Mammary epithelial cell (primary cell): ENCODE measurements at regions of chr4 and their contacts with region 1.

Region 1: DNA sequence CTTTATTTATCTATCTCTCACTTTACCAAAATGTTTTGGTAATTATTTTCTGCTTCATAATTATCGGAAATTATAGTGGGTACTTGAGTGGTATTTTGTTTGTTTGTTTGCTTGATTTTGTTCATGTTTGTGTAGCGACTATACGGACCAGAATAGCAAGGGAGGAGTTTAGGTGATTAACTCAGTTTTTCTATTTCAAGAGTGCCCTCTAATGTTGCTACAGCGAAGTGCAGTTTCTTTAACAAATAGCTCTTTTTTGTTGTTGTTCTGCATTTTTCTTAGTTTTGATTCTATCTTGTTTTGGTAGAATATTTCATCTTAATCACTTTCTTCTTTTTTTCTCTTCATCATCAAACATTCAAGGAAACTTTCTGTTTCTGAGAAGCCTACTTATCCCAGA is 40.8 kb upstream of the QRFPR start:
- DNase-seq: no peak
- H3K4me3 ChIP-seq: no peak overlapping the region
- H3K27ac ChIP-seq: no peak overlapping the region
- H3K4me1 ChIP-seq: no peaks in the 10 kb centered on the region
- H3K27me3 ChIP-seq: peaks cover 4% of the 10 kb centered on the region
- CTCF ChIP-seq: peak; percentile 58 to 59

Region 2: GRCh38 chr4:121252224-121252806 is 169.3 kb before region 1 on chr4:
- CTCF ChIA-PET with region 1: no interaction called
- dilution Hi-C with region 1: no loop called
- in situ Hi-C with region 1: no loop called
- intact Hi-C with region 1: loop called (anchors 5 kb)
- DNase-seq: peak; percentile 55
- H3K4me3 ChIP-seq: no peak overlapping the region
- H3K27ac ChIP-seq: no peak overlapping the region
- H3K4me1 ChIP-seq: peaks cover 15% of the 10 kb centered on the region
- H3K27me3 ChIP-seq: no peaks in the 10 kb centered on the region
- CTCF ChIP-seq: peak; percentile 90

Region 3: DNA sequence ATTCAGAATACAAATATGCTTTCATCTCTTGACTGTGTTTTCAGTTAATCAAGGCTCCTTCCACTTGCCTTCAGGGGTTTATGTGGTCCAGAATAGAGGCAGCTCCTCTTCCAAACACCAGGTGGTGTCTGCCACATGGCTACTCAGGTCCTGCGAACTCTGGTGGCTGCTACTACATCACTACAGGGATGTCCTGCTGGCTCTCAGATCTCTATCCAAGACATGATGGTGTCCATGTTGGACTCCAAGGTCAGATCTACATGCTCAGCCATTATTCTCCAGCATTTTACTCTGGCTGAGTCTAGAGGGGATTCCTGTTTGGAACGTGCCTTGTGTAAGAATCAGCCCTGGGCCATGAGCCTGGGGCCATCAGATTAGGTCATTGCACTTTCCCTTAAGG is 144.0 kb before region 1 on chr4:
- CTCF ChIA-PET with region 1: interaction called, 5 read pairs
- dilution Hi-C with region 1: no loop called
- in situ Hi-C with region 1: no loop called
- intact Hi-C with region 1: loop called (anchors 5 kb)
- DNase-seq: peak; percentile 11
- H3K4me3 ChIP-seq: no peak overlapping the region
- H3K27ac ChIP-seq: no peak overlapping the region
- H3K4me1 ChIP-seq: no peaks in the 10 kb centered on the region
- H3K27me3 ChIP-seq: no peaks in the 10 kb centered on the region
- CTCF ChIP-seq: peak; percentile 16 to 45

Region 4: GRCh38 chr4:121510341-121510874 is 88.8 kb after region 1 on chr4:
- CTCF ChIA-PET with region 1: no interaction called
- dilution Hi-C with region 1: no loop called
- in situ Hi-C with region 1: no loop called
- intact Hi-C with region 1: no loop called
- DNase-seq: no peak
- H3K4me3 ChIP-seq: no peak overlapping the region
- H3K27ac ChIP-seq: no peak overlapping the region
- H3K4me1 ChIP-seq: no peaks in the 10 kb centered on the region
- H3K27me3 ChIP-seq: peaks cover 2% of the 10 kb centered on the region
- CTCF ChIP-seq: no peak

Region 5: DNA sequence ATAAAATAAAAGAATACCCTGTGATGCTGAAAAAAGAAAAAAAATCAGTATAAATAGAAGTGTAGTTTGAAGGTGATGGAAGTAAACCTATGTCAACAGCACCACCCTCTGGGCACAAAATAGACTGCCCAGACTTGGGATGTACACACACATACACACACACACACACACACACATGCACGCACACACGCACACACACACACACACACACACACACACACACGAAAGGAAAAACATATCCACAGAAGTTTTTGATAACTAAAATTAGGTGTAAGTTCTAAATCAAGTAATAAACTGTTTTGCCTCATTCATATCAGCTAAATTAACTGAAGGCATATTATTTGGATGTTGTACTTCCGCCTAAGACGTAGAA is 234.7 kb after region 1 on chr4:
- CTCF ChIA-PET with region 1: no interaction called
- dilution Hi-C with region 1: no loop called
- in situ Hi-C with region 1: no loop called
- intact Hi-C with region 1: no loop called
- DNase-seq: peak; percentile 50
- H3K4me3 ChIP-seq: no peak overlapping the region
- H3K27ac ChIP-seq: no peak overlapping the region
- H3K4me1 ChIP-seq: no peaks in the 10 kb centered on the region
- H3K27me3 ChIP-seq: no peaks in the 10 kb centered on the region
- CTCF ChIP-seq: peak; percentile 51 to 59